ENCODE measurements at regions of chr9 and their contacts with region 1.

Region 1: DNA sequence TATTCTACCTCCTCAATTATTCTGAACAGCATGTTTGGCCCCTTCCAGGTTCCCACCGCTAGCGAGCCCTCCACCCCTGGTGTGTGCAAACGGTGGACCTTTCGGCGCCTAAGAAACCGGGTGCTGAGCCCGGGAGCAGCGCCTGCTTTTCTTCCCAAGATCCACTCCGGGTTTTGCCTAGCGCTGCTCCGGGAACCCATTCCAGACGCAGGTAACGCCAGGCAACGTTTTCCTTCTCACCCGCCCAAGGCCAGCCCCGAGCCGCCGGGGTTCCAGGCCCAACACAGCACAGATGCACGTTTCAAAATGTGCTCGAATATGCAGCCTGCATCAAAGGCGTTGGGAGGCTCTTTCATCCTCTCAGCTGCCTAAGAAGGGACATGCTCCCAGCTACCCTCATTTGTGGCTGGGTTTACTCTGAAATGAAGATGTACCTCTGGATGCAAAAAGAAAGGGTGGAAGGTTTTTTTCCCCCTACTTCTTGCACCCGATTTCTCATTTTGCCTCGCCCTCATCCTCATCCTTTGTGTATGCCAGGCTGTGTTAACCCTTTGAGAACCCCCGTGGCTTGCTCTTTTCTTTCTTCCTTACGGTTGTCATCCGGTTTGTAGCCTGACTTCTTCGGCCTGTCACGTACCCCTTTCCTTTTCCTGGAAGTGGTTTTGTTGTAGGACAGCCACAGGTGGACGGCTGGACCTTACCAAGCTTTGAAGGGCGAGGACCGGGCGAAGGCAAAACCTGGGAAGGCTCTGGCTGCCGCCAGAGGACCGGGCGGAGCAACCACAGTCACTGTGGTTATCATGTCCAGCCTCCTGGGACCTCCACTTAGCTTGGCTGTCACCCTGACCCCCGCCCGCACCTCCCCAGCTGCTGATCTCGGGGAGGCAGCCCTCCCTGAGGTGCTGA is 226.9 kb downstream of the SMARCA2 start:
- DNase-seq: peak; percentile 93
- H3K4me3 ChIP-seq: peak overlapping the region; percentile 40
- H3K27ac ChIP-seq: peak overlapping the region; percentile 57
- H3K4me1 ChIP-seq: peaks cover 12% of the 10 kb centered on the region
- H3K27me3 ChIP-seq: no peaks in the 10 kb centered on the region
- CTCF ChIP-seq: no peak; the same call in 1 of the 2 replicates

Region 2: GRCh38 chr9:2494562-2494961 is 252.5 kb after region 1 on chr9:
- CTCF ChIA-PET with region 1: no interaction called
- POLR2A ChIA-PET with region 1: no interaction called
- intact Hi-C with region 1: loop called (anchors 10 kb)
- DNase-seq: no peak
- H3K4me3 ChIP-seq: no peak overlapping the region
- H3K27ac ChIP-seq: no peak overlapping the region
- H3K4me1 ChIP-seq: no peaks in the 10 kb centered on the region
- H3K27me3 ChIP-seq: no peaks in the 10 kb centered on the region
- CTCF ChIP-seq: no peak